Motor neuron (in vitro differentiated cells): ENCODE measurements at regions of chr18 and their contacts with region 1.

Region 1: DNA sequence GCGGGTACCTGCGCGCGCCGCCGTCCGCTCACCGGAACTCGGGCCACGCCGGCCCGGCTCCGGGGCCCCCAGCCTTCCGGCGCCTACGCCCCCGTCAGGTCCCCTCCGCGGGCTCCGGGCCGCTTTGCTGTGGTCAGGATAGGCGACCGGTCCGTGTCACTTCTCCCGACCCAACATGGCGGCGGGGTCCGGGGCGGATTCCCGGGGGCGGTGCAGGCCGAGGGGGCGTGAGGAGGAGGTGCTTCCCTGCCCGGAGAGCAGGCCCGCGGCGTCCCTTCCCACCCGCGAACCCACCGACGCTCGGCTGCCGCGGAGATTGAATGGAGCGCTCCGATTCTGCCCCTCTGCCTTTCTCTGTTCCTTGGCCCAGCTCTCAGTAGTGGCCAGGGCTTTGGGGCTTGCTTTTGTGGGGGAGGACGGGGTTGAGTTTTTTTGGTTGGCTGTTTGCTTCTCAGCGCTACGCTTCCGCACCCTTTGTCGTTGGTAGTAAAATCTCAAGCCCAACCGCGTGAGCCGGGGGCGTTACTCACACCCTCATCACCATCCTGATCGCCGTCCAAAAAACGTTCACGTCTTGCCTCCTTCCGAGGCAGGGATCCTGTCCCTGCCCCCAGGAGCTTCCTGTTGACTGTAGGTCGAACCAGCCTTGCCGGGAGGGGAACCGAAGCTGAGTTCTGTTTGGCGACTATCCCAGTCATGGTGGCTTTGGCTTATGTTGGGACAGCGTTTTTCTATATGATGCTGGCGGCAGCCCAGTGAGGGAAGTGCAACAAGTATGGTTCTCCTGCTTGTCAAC is 532 bp upstream of the YES1 start:
- ATAC-seq: peak; percentile 78 to 94 (median 92)
- H3K4me3 ChIP-seq: peak overlapping the region; percentile 55 to 96 (median 88)
- H3K27ac ChIP-seq: peak overlapping the region; percentile 73 to 94
- H3K4me1 ChIP-seq: peaks cover 2 to 19% of the 10 kb centered on the region in 2 donors

Region 2: GRCh38 chr18:644395-645004 is 168.1 kb before region 1 on chr18:
- in situ Hi-C with region 1: loop called in 1 of 9 experiments (anchors 25 kb)
- ATAC-seq: peak in 6 of 8 experiments; percentile 72 to 96 (median 86)
- H3K4me3 ChIP-seq: no peak overlapping the region
- H3K27ac ChIP-seq: no peak overlapping the region
- H3K4me1 ChIP-seq: no peaks in the 10 kb centered on the region

Region 3: GRCh38 chr18:2102022-2102421 is 1289.4 kb after region 1 on chr18:
- in situ Hi-C with region 1: no loop called
- ATAC-seq: no peak
- H3K4me3 ChIP-seq: no peak overlapping the region
- H3K27ac ChIP-seq: no peak overlapping the region
- H3K4me1 ChIP-seq: no peaks in the 10 kb centered on the region